GM12878 (cell line): ENCODE measurements at regions of chr16 and their contacts with region 1.

Region 1: GRCh38 chr16:69396187-69397061 is 10.6 kb upstream of the TERF2 start:
- DNase-seq: peak; percentile 45
- ATAC-seq: peak; percentile 79
- H3K4me3 ChIP-seq: no peak overlapping the region
- H3K27ac ChIP-seq: no peak overlapping the region
- H3K4me1 ChIP-seq: no peaks in the 10 kb centered on the region
- H3K27me3 ChIP-seq: no peaks in the 10 kb centered on the region
- CTCF ChIP-seq: peak; percentile 42 to 62 (median 51); a peak in 4 of 6 replicates
- EP300 ChIP-seq: no peak
- POLR2A ChIP-seq: no peak
- RAD21 ChIP-seq: peak; percentile 73

Region 2: DNA sequence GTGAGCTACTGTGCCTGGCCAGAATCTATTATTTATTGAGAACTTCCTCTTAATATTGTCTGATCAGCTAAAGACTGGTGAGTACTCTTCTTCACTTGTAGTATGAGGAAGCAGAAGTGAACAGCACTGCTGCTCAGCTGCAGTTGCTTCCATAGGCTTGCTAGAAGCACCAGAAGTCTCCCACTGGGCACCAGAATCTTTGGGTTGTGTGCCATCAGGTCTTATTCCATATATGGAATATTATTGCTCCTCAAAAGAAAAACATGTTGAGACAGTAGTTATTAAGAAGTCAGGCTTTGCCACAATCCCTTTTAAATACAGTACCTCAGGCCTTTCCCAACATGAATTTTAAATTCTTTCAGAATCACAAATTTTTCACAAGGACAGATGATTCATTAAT is 192.3 kb before region 1 on chr16:
- CTCF ChIA-PET with region 1: no interaction called
- POLR2A ChIA-PET with region 1: no interaction called
- RAD21 ChIA-PET with region 1: no interaction called
- SMC1A ChIA-PET with region 1: no interaction called
- in situ Hi-C with region 1: no loop called
- intact Hi-C with region 1: no loop called
- DNase-seq: no peak
- ATAC-seq: peak; percentile 63
- H3K4me3 ChIP-seq: no peak overlapping the region
- H3K27ac ChIP-seq: no peak overlapping the region
- H3K4me1 ChIP-seq: peaks cover 14% of the 10 kb centered on the region
- H3K27me3 ChIP-seq: no peaks in the 10 kb centered on the region
- CTCF ChIP-seq: no peak
- EP300 ChIP-seq: no peak
- POLR2A ChIP-seq: no peak
- RAD21 ChIP-seq: no peak

Region 3: DNA sequence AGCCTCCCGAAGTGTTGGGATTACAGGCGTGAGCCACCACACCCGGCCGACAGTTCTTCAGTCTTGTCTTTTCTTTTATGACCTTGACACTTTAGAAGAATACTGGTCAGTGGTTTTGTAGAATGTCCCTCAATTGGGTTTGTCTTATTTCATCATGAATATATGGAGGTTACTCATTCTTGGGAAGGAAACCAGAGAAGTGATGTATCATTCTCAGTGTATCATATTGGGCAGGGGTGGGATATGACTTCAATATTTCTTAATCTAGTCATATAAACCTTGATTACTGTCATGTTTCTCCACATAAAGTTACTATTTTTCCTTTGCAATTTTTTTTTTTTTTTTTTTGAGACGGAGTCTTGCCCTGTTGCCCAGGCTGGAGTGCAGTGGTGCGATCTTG is 172.5 kb before region 1 on chr16:
- CTCF ChIA-PET with region 1: no interaction called
- POLR2A ChIA-PET with region 1: no interaction called
- RAD21 ChIA-PET with region 1: no interaction called
- SMC1A ChIA-PET with region 1: no interaction called
- in situ Hi-C with region 1: no loop called
- intact Hi-C with region 1: no loop called
- DNase-seq: no peak
- ATAC-seq: no peak
- H3K4me3 ChIP-seq: no peak overlapping the region
- H3K27ac ChIP-seq: no peak overlapping the region
- H3K4me1 ChIP-seq: no peaks in the 10 kb centered on the region
- H3K27me3 ChIP-seq: no peaks in the 10 kb centered on the region
- CTCF ChIP-seq: no peak
- EP300 ChIP-seq: no peak
- POLR2A ChIP-seq: no peak
- RAD21 ChIP-seq: no peak

Region 4: GRCh38 chr16:69424053-69424934 is 27.9 kb after region 1 on chr16 and contains the start of gene CYB5B:
- CTCF ChIA-PET with region 1: interaction called, 10 read pairs
- POLR2A ChIA-PET with region 1: no interaction called
- RAD21 ChIA-PET with region 1: interaction called, 7 read pairs
- SMC1A ChIA-PET with region 1: interaction called, 4 read pairs
- in situ Hi-C with region 1: no loop called
- intact Hi-C with region 1: no loop called
- DNase-seq: peak; percentile 98
- ATAC-seq: peak; percentile 98
- H3K4me3 ChIP-seq: peak within 1 kb of the TSS; percentile 77
- H3K27ac ChIP-seq: peak within 1 kb of the TSS; percentile 78
- H3K4me1 ChIP-seq: no peaks in the 10 kb centered on the region
- H3K27me3 ChIP-seq: no peaks in the 10 kb centered on the region
- CTCF ChIP-seq: no peak
- EP300 ChIP-seq: no peak
- POLR2A ChIP-seq: peak; percentile 97
- RAD21 ChIP-seq: no peak
- polyA plus RNA-seq, gene CYB5B: 170 to 182 TPM

Region 5: GRCh38 chr16:69451166-69451565 is 54.7 kb after region 1 on chr16:
- CTCF ChIA-PET with region 1: interaction called, 22 read pairs
- POLR2A ChIA-PET with region 1: no interaction called
- RAD21 ChIA-PET with region 1: interaction called, 9 read pairs
- SMC1A ChIA-PET with region 1: interaction called, 10 read pairs
- in situ Hi-C with region 1: no loop called
- intact Hi-C with region 1: no loop called
- DNase-seq: no peak
- ATAC-seq: no peak
- H3K4me3 ChIP-seq: no peak overlapping the region
- H3K27ac ChIP-seq: no peak overlapping the region
- H3K4me1 ChIP-seq: no peaks in the 10 kb centered on the region
- H3K27me3 ChIP-seq: no peaks in the 10 kb centered on the region
- CTCF ChIP-seq: no peak
- EP300 ChIP-seq: no peak
- POLR2A ChIP-seq: no peak
- RAD21 ChIP-seq: no peak

Region 6: GRCh38 chr16:69644790-69645189 is 248.4 kb after region 1 on chr16:
- CTCF ChIA-PET with region 1: interaction called, 8 read pairs
- POLR2A ChIA-PET with region 1: no interaction called
- RAD21 ChIA-PET with region 1: interaction called, 8 read pairs
- SMC1A ChIA-PET with region 1: interaction called, 11 read pairs
- in situ Hi-C with region 1: no loop called
- intact Hi-C with region 1: loop called (anchors 10 kb)
- DNase-seq: no peak
- ATAC-seq: no peak
- H3K4me3 ChIP-seq: no peak overlapping the region
- H3K27ac ChIP-seq: no peak overlapping the region
- H3K4me1 ChIP-seq: no peaks in the 10 kb centered on the region
- H3K27me3 ChIP-seq: no peaks in the 10 kb centered on the region
- CTCF ChIP-seq: no peak
- EP300 ChIP-seq: no peak
- POLR2A ChIP-seq: no peak
- RAD21 ChIP-seq: no peak

Region 7: DNA sequence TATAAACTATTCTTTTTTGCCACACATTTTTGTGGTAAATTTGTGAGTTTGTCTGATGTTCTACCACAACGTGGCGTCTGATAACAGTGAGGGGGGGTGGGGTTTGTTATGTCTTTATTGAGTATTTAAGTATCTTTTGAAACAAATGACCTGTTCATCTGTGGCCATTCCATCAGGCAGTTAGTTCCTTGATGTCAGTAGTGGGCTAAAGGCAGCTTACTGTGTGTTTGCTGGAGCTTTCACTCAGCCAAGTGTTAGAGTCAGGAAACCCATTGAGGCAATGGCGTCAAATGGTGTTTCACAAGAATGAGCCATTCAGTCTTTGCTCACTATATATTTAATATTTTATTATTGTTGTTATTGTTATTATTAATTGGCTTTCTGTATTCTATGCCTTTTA is 302.0 kb after region 1 on chr16:
- CTCF ChIA-PET with region 1: interaction called, 26 read pairs
- POLR2A ChIA-PET with region 1: interaction called, 3 read pairs
- RAD21 ChIA-PET with region 1: interaction called, 12 read pairs
- SMC1A ChIA-PET with region 1: interaction called, 13 read pairs
- in situ Hi-C with region 1: no loop called
- intact Hi-C with region 1: loop called (anchors 5 kb)
- DNase-seq: no peak
- ATAC-seq: no peak
- H3K4me3 ChIP-seq: no peak overlapping the region
- H3K27ac ChIP-seq: no peak overlapping the region
- H3K4me1 ChIP-seq: no peaks in the 10 kb centered on the region
- H3K27me3 ChIP-seq: no peaks in the 10 kb centered on the region
- CTCF ChIP-seq: no peak
- EP300 ChIP-seq: no peak
- POLR2A ChIP-seq: no peak
- RAD21 ChIP-seq: no peak

Region 8: DNA sequence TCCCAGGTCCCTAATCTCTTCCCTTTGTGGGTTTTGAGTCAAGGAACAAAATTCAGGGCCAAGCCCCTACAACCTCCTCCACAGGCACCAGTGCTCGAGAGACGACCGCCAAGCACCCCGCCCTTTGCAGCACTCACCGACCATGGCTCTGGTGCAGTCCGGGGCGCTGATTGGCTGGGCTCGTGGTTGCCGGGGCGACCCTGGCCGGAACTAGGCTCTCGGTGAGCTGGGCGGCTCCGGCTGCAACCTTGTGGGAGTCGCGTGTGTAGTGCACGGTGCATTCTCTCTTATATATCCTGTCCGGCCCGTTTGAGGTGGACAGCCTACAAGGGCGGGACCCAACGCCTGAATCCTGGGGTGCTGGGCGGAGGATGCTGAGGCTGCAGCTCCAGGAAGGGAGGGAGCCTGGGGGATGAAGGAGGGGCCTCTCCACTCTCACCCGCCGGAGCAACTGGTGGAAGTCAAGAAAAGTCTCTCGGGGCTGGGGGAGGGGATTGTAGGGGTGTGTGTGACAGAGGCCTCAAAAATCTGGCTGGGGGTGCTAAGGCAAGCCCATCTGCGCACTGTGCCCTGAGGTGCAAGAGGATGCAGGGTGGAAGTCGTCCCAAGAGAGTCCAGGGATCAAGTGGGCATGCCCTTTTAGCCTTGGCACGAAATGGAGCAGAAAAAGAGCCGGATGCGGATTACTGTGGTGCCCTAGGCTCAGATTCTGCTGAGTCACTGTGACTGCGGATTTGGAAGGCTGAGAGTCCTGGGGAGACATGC is 330.1 kb after region 1 on chr16 and contains the start of gene NQO1:
- CTCF ChIA-PET with region 1: interaction called, 5 read pairs
- POLR2A ChIA-PET with region 1: interaction called, 3 read pairs
- RAD21 ChIA-PET with region 1: interaction called, 10 read pairs
- SMC1A ChIA-PET with region 1: interaction called, 6 read pairs
- in situ Hi-C with region 1: no loop called
- intact Hi-C with region 1: no loop called
- DNase-seq: peak; percentile 81
- ATAC-seq: peak; percentile 99
- H3K4me3 ChIP-seq: peak within 1 kb of the TSS; percentile 78
- H3K27ac ChIP-seq: peak within 1 kb of the TSS; percentile 92
- H3K4me1 ChIP-seq: no peaks in the 10 kb centered on the region; the same call in none of the 2 replicates
- H3K27me3 ChIP-seq: no peaks in the 10 kb centered on the region
- CTCF ChIP-seq: no peak
- EP300 ChIP-seq: no peak
- POLR2A ChIP-seq: peak; percentile 92
- RAD21 ChIP-seq: no peak
- polyA plus RNA-seq, gene NQO1: 35.2 to 40.0 TPM